HEK293 (cell line): ENCODE measurements at regions of chr16 and their contacts with region 1.

Region 1: DNA sequence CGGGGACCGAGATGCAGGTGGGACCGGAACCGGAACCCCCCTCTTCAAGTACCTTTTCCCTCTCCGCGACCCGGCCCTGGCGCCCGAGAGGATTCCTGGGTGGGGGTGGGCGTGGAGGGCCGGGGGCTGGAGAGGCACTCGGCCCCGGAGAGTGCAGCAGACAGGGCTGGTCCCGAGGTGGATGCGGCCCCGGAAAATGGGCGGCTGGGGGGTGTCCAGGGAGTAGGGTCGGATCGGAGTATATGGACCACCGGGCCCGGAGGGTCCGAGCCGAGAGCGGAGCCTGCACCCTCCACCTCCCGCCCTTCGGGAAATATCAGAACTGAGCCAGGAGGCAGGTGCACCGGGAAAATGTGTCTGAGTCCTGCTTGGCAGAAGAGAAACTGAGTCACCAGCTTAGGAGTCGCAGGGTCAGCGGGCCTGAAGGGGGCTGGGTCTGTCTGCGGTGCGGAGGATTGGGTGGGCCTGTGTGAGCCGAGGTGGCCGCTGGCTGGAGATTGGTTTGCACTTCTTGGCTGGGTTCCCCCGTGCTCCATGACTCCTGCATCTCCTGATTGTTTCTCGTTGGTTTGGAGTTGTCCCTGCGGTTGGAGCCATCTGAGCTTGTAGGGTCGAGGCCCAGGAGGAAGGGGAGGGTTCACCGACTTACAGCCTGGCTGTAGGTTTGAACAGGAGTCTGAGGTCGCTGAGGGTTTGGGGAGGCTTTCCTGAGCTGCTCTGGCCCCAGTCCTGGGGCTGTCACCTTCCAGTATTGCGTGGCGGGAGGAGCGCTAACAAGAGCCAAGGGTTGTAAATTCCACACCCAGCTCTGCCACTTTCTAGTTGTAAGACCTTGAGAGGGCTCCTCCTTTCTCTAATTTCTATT is 518 bp downstream of the SH2B1 start:
- H3K4me3 ChIP-seq: peak overlapping the region; percentile 99
- H3K27ac ChIP-seq: peak overlapping the region; percentile 88; the same call in 1 of the 2 replicates
- H3K4me1 ChIP-seq: no peaks in the 10 kb centered on the region; the same call in 1 of the 2 replicates
- CTCF ChIP-seq: no peak

Region 2: DNA sequence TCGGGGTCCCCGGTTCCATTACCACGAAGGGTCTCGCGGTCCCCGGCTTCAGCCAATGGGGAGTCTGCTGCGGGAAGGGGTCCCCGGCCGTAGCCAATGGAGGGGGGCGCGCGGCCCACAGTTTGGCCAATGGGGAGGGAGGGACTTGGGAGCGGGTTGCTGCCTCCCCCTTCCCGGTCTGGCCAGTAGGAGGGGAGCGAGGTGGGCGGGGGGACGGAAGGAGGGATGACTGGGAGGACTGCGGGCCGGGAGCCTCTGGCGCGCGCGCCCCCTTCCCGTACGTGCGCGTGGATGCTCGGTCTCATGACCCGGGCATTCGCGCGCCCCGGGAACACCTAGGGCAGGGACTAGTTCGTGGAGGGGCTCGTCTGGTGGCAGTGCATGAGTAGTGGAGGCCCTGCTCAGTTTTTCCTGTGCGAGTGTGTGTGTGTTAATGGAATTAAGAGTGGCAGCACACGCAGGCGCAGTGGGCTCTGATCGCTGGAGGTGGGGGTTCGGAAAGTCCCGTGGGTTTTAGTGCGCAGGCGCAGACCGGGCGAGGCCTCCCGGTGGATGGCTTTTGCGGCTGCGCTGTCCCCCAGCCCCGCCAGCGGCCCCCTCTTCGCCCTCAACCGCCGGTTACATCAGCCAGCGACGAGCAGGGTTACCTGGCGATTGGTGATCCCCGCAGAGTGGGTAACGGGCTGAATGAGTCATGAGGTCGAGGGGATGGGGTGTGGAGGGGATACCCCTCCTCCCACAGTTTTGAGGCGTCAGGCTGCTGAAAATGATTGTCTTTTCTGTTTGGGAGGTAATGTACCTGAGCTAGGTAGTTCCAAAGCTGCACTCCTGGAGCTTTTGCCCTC is 40.1 kb before region 1 on chr16:
- CTCF ChIA-PET with region 1: no interaction called
- POLR2A ChIA-PET with region 1: interaction called, 10 read pairs
- H3K4me3 ChIP-seq: peak overlapping the region; percentile 89
- H3K27ac ChIP-seq: peak overlapping the region; percentile 99
- H3K4me1 ChIP-seq: peaks cover 6% of the 10 kb centered on the region; the same call in 1 of the 2 replicates
- CTCF ChIP-seq: peak; percentile 92

Region 3: GRCh38 chr16:28846080-28846932 is 17.9 kb before region 1 on chr16 and contains the start of gene TUFM:
- CTCF ChIA-PET with region 1: interaction called, 15 read pairs
- POLR2A ChIA-PET with region 1: interaction called, 72 read pairs
- H3K4me3 ChIP-seq: peak within 1 kb of the TSS; percentile 95
- H3K27ac ChIP-seq: peak within 1 kb of the TSS; percentile 65
- H3K4me1 ChIP-seq: no peaks in the 10 kb centered on the region
- CTCF ChIP-seq: peak; percentile 97

Region 4: DNA sequence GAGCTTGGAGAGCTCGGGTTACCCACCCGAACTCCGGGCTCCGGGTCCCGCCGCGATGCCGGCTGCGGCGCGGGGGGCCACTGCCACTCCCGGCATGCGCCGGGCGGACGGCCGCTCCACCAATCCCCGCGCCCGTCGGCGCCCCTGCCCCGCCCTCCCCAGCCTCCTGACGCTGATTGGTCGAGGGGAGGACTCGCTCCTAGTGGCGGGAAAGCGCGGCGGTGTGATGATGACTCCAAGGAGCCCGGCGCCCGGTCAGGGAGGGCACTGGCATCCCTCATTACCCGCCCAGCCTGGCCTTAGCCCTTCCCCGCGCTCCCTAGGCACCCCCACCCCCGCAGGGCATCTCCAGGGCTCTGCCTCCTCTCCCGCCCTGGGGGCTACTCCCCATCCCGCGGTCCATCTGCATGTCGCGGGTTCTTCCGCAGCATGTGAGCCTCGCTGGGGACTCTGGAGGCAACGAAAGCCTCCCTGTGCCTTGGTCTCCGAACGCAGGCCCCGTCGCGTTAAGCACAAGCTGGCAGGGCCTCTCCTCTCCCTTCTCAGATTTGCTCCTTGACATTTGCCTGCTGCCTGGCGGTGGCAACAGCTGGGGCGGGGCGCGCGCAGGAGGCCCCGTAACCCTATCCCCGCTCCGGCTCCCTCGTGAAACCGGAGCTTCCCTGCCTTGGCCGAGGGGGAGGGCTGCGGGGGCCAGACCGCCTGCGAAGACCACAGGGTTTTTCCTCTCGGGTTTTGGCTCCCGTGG is 15.9 kb after region 1 on chr16:
- CTCF ChIA-PET with region 1: interaction called, 14 read pairs
- POLR2A ChIA-PET with region 1: interaction called, 13 read pairs
- H3K4me3 ChIP-seq: peak overlapping the region; percentile 62
- H3K27ac ChIP-seq: peak overlapping the region; percentile 67; the same call in 1 of the 2 replicates
- H3K4me1 ChIP-seq: peaks cover 11% of the 10 kb centered on the region
- CTCF ChIP-seq: peak; percentile 6; the same call in 1 of the 2 replicates

Region 5: GRCh38 chr16:28943281-28943680 is 79.1 kb after region 1 on chr16:
- CTCF ChIA-PET with region 1: interaction called, 11 read pairs
- POLR2A ChIA-PET with region 1: interaction called, 6 read pairs
- H3K4me3 ChIP-seq: no peak overlapping the region
- H3K27ac ChIP-seq: no peak overlapping the region
- H3K4me1 ChIP-seq: no peaks in the 10 kb centered on the region
- CTCF ChIP-seq: no peak

Region 6: GRCh38 chr16:28950648-28951409 is 86.7 kb after region 1 on chr16 and contains the start of gene NFATC2IP:
- CTCF ChIA-PET with region 1: interaction called, 5 read pairs
- POLR2A ChIA-PET with region 1: interaction called, 15 read pairs
- H3K4me3 ChIP-seq: peak within 1 kb of the TSS; percentile 90
- H3K27ac ChIP-seq: peak within 1 kb of the TSS; percentile 83
- H3K4me1 ChIP-seq: no peaks in the 10 kb centered on the region
- CTCF ChIP-seq: no peak